ENCODE measurements at regions of chr13 and their contacts with region 1.

Region 1: GRCh38 chr13:41613984-41614661 is 156.8 kb downstream of the RGCC start:
- DNase-seq: peak; percentile 78 to 79
- H3K4me3 ChIP-seq: no peak overlapping the region
- H3K4me3 Mint-ChIP-seq: peak overlapping the region; percentile 47
- H3K27ac Mint-ChIP-seq: peak overlapping the region; percentile 84
- H3K4me1 ChIP-seq: peaks cover 70% of the 10 kb centered on the region
- H3K4me1 Mint-ChIP-seq: peaks cover 53% of the 10 kb centered on the region
- H3K27me3 ChIP-seq: no peaks in the 10 kb centered on the region
- H3K27me3 Mint-ChIP-seq: no peaks in the 10 kb centered on the region
- CTCF ChIP-seq: no peak

Region 2: GRCh38 chr13:41411522-41411921 is 202.6 kb before region 1 on chr13:
- CTCF ChIA-PET with region 1: no interaction called
- POLR2A ChIA-PET with region 1: no interaction called
- intact Hi-C with region 1: loop called (anchors 5 kb)
- DNase-seq: peak; percentile 72 to 74
- H3K4me3 ChIP-seq: no peak overlapping the region
- H3K4me3 Mint-ChIP-seq: no peak overlapping the region
- H3K27ac Mint-ChIP-seq: no peak overlapping the region
- H3K4me1 ChIP-seq: 0 out of 2 replicates have a peak, but pooled peaks cover 4% of the 10 kb centered on the region
- H3K4me1 Mint-ChIP-seq: no peaks in the 10 kb centered on the region
- H3K27me3 ChIP-seq: no peaks in the 10 kb centered on the region
- H3K27me3 Mint-ChIP-seq: no peaks in the 10 kb centered on the region
- CTCF ChIP-seq: peak; percentile 48 to 52

Region 3: GRCh38 chr13:41639955-41640780 is 26.0 kb after region 1 on chr13:
- CTCF ChIA-PET with region 1: no interaction called
- POLR2A ChIA-PET with region 1: no interaction called
- intact Hi-C with region 1: loop called (anchors 1 kb)
- DNase-seq: peak in 1 of 2 experiments; percentile 50
- H3K4me3 ChIP-seq: no peak overlapping the region
- H3K4me3 Mint-ChIP-seq: no peak overlapping the region
- H3K27ac Mint-ChIP-seq: peak overlapping the region; percentile 87
- H3K4me1 ChIP-seq: peaks cover 44% of the 10 kb centered on the region
- H3K4me1 Mint-ChIP-seq: peaks cover 64% of the 10 kb centered on the region
- H3K27me3 ChIP-seq: no peaks in the 10 kb centered on the region
- H3K27me3 Mint-ChIP-seq: no peaks in the 10 kb centered on the region
- CTCF ChIP-seq: no peak

Region 4: GRCh38 chr13:41694545-41695301 is 80.6 kb after region 1 on chr13:
- CTCF ChIA-PET with region 1: no interaction called
- POLR2A ChIA-PET with region 1: interaction called, 3 read pairs
- intact Hi-C with region 1: loop called (anchors 5 kb)
- DNase-seq: peak in 1 of 2 experiments; percentile 42
- H3K4me3 ChIP-seq: no peak overlapping the region
- H3K4me3 Mint-ChIP-seq: peak overlapping the region; percentile 54
- H3K27ac Mint-ChIP-seq: peak overlapping the region; percentile 94
- H3K4me1 ChIP-seq: peaks cover 57% of the 10 kb centered on the region
- H3K4me1 Mint-ChIP-seq: peaks cover 40% of the 10 kb centered on the region
- H3K27me3 ChIP-seq: no peaks in the 10 kb centered on the region
- H3K27me3 Mint-ChIP-seq: no peaks in the 10 kb centered on the region
- CTCF ChIP-seq: no peak

Measured in Caco-2 (cell line).